ENCODE measurements at regions of chr19 and their contacts with region 1.

Region 1: DNA sequence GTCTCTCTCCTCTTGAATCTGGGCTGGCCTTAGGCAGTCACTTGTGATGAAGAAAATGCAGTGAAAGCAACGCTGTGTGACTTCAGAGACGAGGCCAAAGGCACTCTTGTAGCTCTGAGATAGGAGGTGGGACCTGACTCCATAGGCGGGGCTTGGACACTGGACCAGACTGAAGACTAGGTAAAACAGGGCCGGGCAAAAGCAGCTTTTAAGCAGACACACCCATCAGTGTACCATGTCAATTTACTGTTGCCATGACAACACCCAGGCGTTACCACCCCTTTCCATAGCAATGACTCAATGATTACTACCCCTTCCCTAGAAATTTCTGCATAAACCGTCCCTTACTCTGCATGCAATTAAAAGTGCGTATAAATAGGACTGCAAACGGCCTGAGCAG is 6.6 kb upstream of the EID2 start:
- H3K4me3 Mint-ChIP-seq: no peak overlapping the region
- H3K27ac Mint-ChIP-seq: no peak overlapping the region
- H3K4me1 Mint-ChIP-seq: peaks cover 7% of the 10 kb centered on the region
- H3K27me3 Mint-ChIP-seq: peaks cover 14% of the 10 kb centered on the region

Region 2: GRCh38 chr19:39671738-39672363 is 125.3 kb after region 1 on chr19:
- intact Hi-C with region 1: loop called (anchors 1 kb)
- H3K4me3 Mint-ChIP-seq: no peak overlapping the region
- H3K27ac Mint-ChIP-seq: no peak overlapping the region
- H3K4me1 Mint-ChIP-seq: peaks cover 5% of the 10 kb centered on the region
- H3K27me3 Mint-ChIP-seq: peaks cover 17% of the 10 kb centered on the region